Heart left ventricle (tissue), 16 donors: ENCODE measurements at regions of chrX and their contacts with region 1.

Region 1: DNA sequence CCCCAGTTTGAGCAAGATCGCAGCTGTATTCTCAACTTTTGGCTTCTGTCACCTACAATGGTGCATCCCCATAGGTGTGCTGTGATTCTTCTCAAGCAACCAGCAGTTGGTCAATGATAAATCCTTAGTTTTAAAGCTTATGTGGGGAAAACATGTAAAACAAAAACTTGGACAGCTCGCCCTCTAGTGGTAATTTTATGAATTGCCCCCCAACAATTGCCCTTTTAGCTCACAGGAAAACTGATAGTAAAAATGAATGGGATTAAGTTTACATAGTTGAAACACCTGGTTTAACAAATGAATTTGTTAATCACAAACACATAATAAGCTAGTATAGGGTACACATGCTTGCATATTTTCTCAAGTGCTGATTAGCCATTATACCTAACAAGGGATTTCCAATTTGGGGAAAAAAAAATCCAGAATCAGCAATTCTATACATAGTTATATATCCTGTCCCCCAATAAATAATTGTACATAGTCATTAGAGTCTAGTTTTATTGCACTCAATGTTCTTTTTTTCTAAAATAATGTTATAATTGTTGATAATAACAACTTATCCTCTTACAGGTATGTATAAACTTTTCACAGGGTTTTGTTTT is 30.1 kb downstream of the TEX13A start:
- DNase-seq: no peak
- ATAC-seq: no peak
- H3K4me3 ChIP-seq: no peak overlapping the region
- H3K27ac ChIP-seq: no peak overlapping the region
- H3K4me1 ChIP-seq: no peaks in the 10 kb centered on the region
- H3K27me3 ChIP-seq: peaks cover 0 to 19% (median 0%) of the 10 kb centered on the region in 9 donors
- CTCF ChIP-seq: peak; percentile 42 to 89 (median 64)
- POLR2A ChIP-seq: no peak

Region 2: GRCh38 chrX:104189837-104190236 is 1000.5 kb before region 1 on chrX:
- intact Hi-C with region 1: loop called in 1 of 10 experiments (anchors 5 kb)
- DNase-seq: no peak
- ATAC-seq: no peak
- H3K4me3 ChIP-seq: no peak overlapping the region
- H3K27ac ChIP-seq: no peak overlapping the region
- H3K4me1 ChIP-seq: no peaks in the 10 kb centered on the region
- H3K27me3 ChIP-seq: peaks cover 0 to 20% (median 0%) of the 10 kb centered on the region in 9 donors
- CTCF ChIP-seq: no peak
- POLR2A ChIP-seq: no peak

Region 3: GRCh38 chrX:105168612-105169011 is 21.7 kb before region 1 on chrX:
- intact Hi-C with region 1: no loop called
- DNase-seq: no peak
- ATAC-seq: no peak
- H3K4me3 ChIP-seq: no peak overlapping the region
- H3K27ac ChIP-seq: no peak overlapping the region
- H3K4me1 ChIP-seq: no peaks in the 10 kb centered on the region
- H3K27me3 ChIP-seq: peaks cover 0 to 5% (median 0%) of the 10 kb centered on the region in 9 donors
- CTCF ChIP-seq: no peak
- POLR2A ChIP-seq: no peak